ENCODE measurements at regions of chr5 and their contacts with region 1.

Region 1: DNA sequence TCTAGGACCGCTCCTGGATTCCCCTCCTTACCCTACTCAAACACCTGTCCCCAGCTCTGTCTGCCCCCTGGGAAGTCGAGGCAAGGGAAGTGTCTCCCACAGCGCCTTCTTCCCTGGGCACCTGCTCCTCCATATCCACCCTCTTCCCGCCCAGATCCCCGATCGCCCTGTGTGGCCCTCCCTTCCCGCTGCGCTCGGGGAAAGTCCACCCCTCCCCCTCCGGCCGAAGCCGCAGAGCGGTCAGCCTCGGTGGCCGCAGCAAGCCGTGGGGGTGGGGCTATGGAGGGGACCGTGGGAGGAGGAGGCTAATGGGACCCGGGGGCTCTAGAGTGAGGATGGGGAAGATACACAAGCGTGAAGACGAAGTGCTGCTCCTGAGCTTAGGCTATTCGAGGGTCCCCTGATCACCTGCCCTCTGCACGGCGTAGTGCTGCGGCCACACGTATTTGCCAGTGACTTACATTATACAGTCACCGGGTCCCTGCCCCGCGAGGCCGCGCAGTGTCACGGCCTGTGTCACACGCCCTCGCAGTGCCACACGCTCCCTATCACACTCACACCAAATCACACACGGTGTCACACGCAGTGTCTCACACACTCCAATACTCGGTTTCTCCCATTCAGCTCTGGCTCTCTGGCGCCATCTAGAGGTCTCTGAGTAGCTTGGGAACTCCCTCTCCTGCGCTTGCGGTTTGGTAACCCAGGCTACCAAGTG is 658 bp upstream of the PCDH1 start:
- DNase-seq: peak; percentile 70
- ATAC-seq: peak; percentile 86
- H3K4me3 Mint-ChIP-seq: peak overlapping the region; percentile 76
- H3K27ac Mint-ChIP-seq: peak overlapping the region; percentile 43
- H3K4me1 Mint-ChIP-seq: peaks cover 34% of the 10 kb centered on the region
- H3K27me3 Mint-ChIP-seq: peaks cover 71% of the 10 kb centered on the region
- CTCF ChIP-seq: peak; percentile 87

Region 2: GRCh38 chr5:141590127-141590526 is 288.7 kb before region 1 on chr5:
- CTCF ChIA-PET with region 1: interaction called, 4 read pairs
- POLR2A ChIA-PET with region 1: no interaction called
- intact Hi-C with region 1: loop called (anchors 5 kb)
- DNase-seq: no peak
- ATAC-seq: no peak
- H3K4me3 Mint-ChIP-seq: no peak overlapping the region
- H3K27ac Mint-ChIP-seq: no peak overlapping the region
- H3K4me1 Mint-ChIP-seq: peaks cover 21% of the 10 kb centered on the region
- H3K27me3 Mint-ChIP-seq: no peaks in the 10 kb centered on the region
- CTCF ChIP-seq: no peak

Region 3: DNA sequence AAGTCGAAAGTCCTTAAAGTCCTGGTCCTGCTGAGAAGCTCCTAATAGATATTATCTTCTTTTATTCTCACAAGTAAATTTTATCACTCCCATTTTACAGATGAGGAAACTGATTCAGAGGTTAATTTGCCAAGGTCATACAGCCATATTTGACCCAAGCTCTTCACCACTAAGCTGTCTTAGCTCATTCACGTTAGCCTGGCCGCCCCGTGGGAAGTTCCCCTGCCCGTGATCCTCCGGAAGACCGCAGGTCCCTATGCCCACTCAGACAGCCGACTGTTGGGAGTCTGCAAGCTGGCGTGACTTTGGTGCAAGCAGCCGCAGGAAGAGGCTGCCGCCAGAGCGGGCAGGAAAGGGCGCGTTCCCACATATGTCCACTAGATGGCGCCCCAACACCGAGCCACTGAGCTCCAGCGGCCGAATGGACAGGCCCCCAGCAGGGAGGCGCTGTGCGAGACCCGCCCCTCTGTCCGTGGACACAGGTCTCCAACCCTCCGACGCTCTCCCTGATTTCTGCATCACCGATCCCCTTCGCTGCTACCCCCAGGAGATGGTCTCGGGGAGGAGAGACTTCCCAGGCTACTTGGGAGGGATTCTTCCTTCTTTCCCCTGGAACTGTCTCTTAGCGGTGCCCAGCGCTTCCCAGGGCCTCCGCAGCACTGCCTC is 186.9 kb before region 1 on chr5:
- CTCF ChIA-PET with region 1: interaction called, 109 read pairs
- POLR2A ChIA-PET with region 1: interaction called, 4 read pairs
- intact Hi-C with region 1: loop called (anchors 1 kb)
- DNase-seq: peak; percentile 83
- ATAC-seq: peak; percentile 98
- H3K4me3 Mint-ChIP-seq: peak overlapping the region; percentile 47
- H3K27ac Mint-ChIP-seq: no peak overlapping the region
- H3K4me1 Mint-ChIP-seq: peaks cover 11% of the 10 kb centered on the region
- H3K27me3 Mint-ChIP-seq: peaks cover 52% of the 10 kb centered on the region
- CTCF ChIP-seq: peak; percentile 81

Region 4: GRCh38 chr5:141747152-141748141 is 131.4 kb before region 1 on chr5:
- CTCF ChIA-PET with region 1: no interaction called
- POLR2A ChIA-PET with region 1: no interaction called
- intact Hi-C with region 1: loop called (anchors 5 kb)
- DNase-seq: peak; percentile 33
- ATAC-seq: peak; percentile 87
- H3K4me3 Mint-ChIP-seq: peak overlapping the region; percentile 33
- H3K27ac Mint-ChIP-seq: peak overlapping the region; percentile 70
- H3K4me1 Mint-ChIP-seq: peaks cover 23% of the 10 kb centered on the region
- H3K27me3 Mint-ChIP-seq: peaks cover 30% of the 10 kb centered on the region
- CTCF ChIP-seq: no peak

Region 5: GRCh38 chr5:141849375-141850243 is 29.3 kb before region 1 on chr5:
- CTCF ChIA-PET with region 1: interaction called, 4 read pairs
- POLR2A ChIA-PET with region 1: no interaction called
- intact Hi-C with region 1: loop called (anchors 1 kb)
- DNase-seq: peak; percentile 66
- ATAC-seq: peak; percentile 84
- H3K4me3 Mint-ChIP-seq: peak overlapping the region; percentile 87
- H3K27ac Mint-ChIP-seq: peak overlapping the region; percentile 53
- H3K4me1 Mint-ChIP-seq: peaks cover 9% of the 10 kb centered on the region
- H3K27me3 Mint-ChIP-seq: peaks cover 11% of the 10 kb centered on the region
- CTCF ChIP-seq: no peak

Region 6: DNA sequence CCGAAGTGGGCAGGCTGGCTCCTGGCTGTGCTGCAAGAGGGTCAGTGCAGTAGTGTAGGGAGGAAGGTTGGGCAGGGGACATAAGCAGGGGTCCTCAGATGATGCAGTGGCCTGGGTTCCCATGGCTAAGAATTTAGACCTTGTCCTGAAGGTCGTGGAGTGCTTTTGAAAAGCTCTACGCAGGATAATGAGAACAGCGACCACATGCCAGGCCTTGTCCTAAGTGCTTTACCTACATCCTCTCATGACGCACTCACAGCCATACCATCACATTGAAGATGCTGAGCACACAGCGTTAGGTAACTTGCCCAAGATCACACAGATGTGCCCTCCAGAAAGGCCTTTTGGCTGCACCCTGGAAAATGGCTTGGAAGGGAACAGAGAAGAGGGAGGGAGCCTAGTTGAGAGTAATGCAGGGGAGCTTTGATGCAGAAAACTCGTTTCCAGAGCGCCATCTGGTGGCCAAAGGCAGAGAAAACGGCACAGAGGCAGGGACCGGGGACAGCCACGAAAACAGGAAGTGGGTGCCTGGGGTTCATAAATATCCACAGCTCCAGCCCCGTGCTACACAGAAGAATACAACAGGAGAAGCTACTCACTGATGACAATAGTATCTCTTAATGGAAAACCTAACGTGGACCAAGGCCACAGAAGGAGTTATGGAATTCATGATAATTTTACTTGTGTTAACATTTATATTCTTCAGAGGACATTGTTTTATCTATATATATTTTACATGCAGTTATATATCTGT is 81.8 kb after region 1 on chr5:
- CTCF ChIA-PET with region 1: interaction called, 32 read pairs
- POLR2A ChIA-PET with region 1: no interaction called
- intact Hi-C with region 1: loop called (anchors 1 kb)
- DNase-seq: peak; percentile 77
- ATAC-seq: peak; percentile 99
- H3K4me3 Mint-ChIP-seq: peak overlapping the region; percentile 9
- H3K27ac Mint-ChIP-seq: peak overlapping the region; percentile 75
- H3K4me1 Mint-ChIP-seq: peaks cover 18% of the 10 kb centered on the region
- H3K27me3 Mint-ChIP-seq: peaks cover 3% of the 10 kb centered on the region
- CTCF ChIP-seq: no peak

Region 7: GRCh38 chr5:142145106-142145900 is 266.4 kb after region 1 on chr5:
- CTCF ChIA-PET with region 1: interaction called, 5 read pairs
- POLR2A ChIA-PET with region 1: no interaction called
- intact Hi-C with region 1: loop called (anchors 1 kb)
- DNase-seq: no peak
- ATAC-seq: peak; percentile 86
- H3K4me3 Mint-ChIP-seq: no peak overlapping the region
- H3K27ac Mint-ChIP-seq: no peak overlapping the region
- H3K4me1 Mint-ChIP-seq: no peaks in the 10 kb centered on the region
- H3K27me3 Mint-ChIP-seq: no peaks in the 10 kb centered on the region
- CTCF ChIP-seq: peak; percentile 78

Measured in activated B cell treated with CpG ODN at 0.5 μM for 24 hours (primary cell).